ENCODE measurements at regions of chr18 and their contacts with region 1.

Region 1: DNA sequence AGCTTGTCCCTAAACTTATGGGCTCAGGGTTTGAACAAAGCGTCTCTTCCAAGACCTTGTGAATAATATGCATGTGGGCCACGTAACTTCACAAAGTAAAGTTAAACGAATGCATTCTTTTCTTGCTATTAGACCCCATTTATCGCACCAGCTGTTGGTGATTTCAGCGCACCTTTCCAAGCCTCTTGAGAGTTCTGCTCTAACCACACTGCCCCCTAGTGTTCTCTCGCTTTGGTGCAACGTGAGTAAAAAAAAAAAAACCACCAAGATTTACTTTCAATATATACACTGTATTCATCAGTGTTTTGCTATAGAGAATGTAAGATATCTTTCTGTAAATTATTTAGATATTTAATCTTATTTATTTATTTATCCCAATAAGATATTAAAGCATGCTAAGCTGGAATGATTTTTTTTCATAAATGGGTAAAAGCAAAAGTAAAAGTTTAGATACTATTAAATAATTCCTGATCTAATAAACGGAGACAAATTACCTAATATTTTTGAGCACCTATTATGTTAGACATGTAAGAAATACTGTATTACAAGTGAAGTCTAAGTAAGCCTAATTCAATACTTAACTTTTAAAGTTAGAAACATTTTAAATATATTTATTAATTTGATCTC is 459.5 kb downstream of the DLGAP1 start:
- DNase-seq: peak; percentile 77
- ATAC-seq: peak; percentile 78
- H3K4me3 Mint-ChIP-seq: no peak overlapping the region
- H3K27ac Mint-ChIP-seq: no peak overlapping the region
- H3K4me1 Mint-ChIP-seq: no peaks in the 10 kb centered on the region
- H3K27me3 Mint-ChIP-seq: peaks cover 4% of the 10 kb centered on the region

Region 2: DNA sequence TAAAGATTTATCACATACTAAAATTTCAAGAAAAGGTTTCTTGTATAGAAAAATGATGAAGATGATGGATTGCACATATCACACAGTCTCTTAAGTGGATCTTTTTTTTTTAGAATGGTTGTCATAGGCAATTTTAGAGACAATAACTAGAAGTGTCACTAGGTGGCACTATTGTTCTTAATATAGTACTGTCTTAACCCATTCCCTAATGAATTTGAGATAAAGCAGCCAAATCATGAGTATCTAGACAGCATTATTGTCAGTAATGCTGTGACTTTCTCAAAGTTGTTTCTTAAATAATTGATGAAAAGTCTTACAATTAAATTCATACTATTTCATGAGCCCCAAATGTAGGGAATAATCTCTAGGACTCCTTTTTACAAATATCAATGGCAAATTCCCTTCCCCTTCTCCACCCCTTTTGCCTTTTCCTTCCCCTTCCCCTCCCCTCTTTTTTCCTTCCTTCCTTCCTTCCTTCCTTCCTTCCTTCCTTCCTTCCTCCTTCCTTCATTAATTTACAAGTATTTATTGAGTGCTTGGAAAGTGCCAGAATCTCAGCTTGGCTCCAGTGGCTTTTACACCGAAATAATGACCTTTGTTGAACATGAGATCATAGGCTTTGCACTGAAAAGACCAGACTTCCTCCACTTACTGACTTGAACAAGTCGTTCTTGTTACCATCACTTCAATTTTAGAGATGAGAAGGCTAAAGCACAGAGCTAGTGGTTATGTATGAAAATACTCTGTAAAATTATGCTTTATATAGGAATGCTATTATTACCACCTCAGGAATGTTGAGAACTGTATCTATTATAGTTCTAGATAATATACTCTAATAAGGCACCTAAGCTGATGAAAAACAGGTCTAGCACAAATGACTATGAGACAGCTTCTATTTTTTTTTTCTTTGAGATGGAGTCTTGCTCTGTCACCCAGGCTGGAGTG is 713.9 kb before region 1 on chr18:
- CTCF ChIA-PET with region 1: interaction called, 4 read pairs
- POLR2A ChIA-PET with region 1: no interaction called
- intact Hi-C with region 1: loop called (anchors 5 kb)
- DNase-seq: no peak
- ATAC-seq: peak; percentile 90
- H3K4me3 Mint-ChIP-seq: no peak overlapping the region
- H3K27ac Mint-ChIP-seq: no peak overlapping the region
- H3K4me1 Mint-ChIP-seq: peaks cover 10% of the 10 kb centered on the region
- H3K27me3 Mint-ChIP-seq: no peaks in the 10 kb centered on the region

Region 3: GRCh38 chr18:3703732-3704176 is 291.8 kb before region 1 on chr18:
- CTCF ChIA-PET with region 1: interaction called, 3 read pairs
- POLR2A ChIA-PET with region 1: no interaction called
- intact Hi-C with region 1: loop called in 1 of 2 experiments (anchors 2 kb)
- DNase-seq: peak; percentile 63
- ATAC-seq: no peak
- H3K4me3 Mint-ChIP-seq: no peak overlapping the region
- H3K27ac Mint-ChIP-seq: no peak overlapping the region
- H3K4me1 Mint-ChIP-seq: peaks cover 4% of the 10 kb centered on the region
- H3K27me3 Mint-ChIP-seq: peaks cover 32% of the 10 kb centered on the region

Region 4: GRCh38 chr18:3966985-3967856 is 28.4 kb before region 1 on chr18:
- CTCF ChIA-PET with region 1: interaction called, 13 read pairs
- POLR2A ChIA-PET with region 1: no interaction called
- intact Hi-C with region 1: no loop called
- DNase-seq: no peak
- ATAC-seq: no peak
- H3K4me3 Mint-ChIP-seq: no peak overlapping the region
- H3K27ac Mint-ChIP-seq: no peak overlapping the region
- H3K4me1 Mint-ChIP-seq: no peaks in the 10 kb centered on the region
- H3K27me3 Mint-ChIP-seq: peaks cover 6% of the 10 kb centered on the region

Region 5: GRCh38 chr18:3983351-3983969 is 12.1 kb before region 1 on chr18:
- CTCF ChIA-PET with region 1: interaction called, 34 read pairs
- POLR2A ChIA-PET with region 1: no interaction called
- intact Hi-C with region 1: no loop called
- DNase-seq: no peak
- ATAC-seq: no peak
- H3K4me3 Mint-ChIP-seq: no peak overlapping the region
- H3K27ac Mint-ChIP-seq: no peak overlapping the region
- H3K4me1 Mint-ChIP-seq: peaks cover 18% of the 10 kb centered on the region
- H3K27me3 Mint-ChIP-seq: peaks cover 2% of the 10 kb centered on the region

Region 6: GRCh38 chr18:4007846-4008245 is 12.3 kb after region 1 on chr18:
- CTCF ChIA-PET with region 1: interaction called, 14 read pairs
- POLR2A ChIA-PET with region 1: no interaction called
- intact Hi-C with region 1: no loop called
- DNase-seq: no peak
- ATAC-seq: no peak
- H3K4me3 Mint-ChIP-seq: no peak overlapping the region
- H3K27ac Mint-ChIP-seq: no peak overlapping the region
- H3K4me1 Mint-ChIP-seq: peaks cover 3% of the 10 kb centered on the region
- H3K27me3 Mint-ChIP-seq: peaks cover 18% of the 10 kb centered on the region

Region 7: DNA sequence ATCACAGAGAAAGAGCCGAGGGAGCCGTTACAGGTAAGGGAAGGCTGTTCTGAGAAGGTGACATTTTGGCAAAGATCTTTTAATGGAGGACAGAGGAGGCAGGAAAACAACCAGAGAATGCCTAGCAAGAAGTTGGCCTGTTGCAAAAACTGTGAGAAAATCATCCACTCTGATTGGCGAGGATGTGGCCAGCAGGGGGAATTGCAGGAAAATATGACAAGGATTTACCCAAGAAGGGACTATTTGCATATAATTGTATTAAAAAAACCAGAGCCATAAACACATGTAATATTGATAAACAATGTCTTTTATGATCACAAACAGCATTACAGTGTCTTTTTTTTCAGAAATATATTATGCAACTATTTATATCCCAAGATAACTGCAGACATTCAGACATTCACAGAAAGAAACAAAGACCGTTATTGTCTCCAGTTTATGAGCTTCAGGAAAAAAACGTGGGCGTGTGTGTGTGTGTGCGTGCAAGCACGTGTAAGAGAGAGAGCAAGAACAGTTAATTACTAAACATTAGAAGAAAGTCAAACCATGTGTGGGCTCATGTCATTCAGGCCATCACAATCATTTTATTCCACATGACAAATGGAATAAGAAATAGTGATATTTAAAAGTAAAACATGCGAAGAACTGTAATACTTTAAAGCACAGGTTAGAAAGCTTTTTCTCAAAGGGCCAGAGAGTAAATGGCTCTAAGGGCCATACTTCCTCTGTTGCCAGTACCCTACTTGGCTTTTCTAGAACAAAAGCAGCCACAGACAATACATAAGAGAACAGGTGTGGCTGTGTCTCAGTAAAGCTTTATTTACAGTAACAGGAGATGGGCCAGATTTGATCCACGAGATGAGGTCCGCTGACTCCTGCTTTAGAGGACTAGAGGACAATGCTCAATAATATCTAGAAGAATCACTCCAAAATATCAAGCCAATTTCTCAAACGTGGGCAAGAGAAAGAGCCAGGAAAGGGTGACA is 135.4 kb after region 1 on chr18:
- CTCF ChIA-PET with region 1: no interaction called
- POLR2A ChIA-PET with region 1: no interaction called
- intact Hi-C with region 1: no loop called
- DNase-seq: no peak
- ATAC-seq: no peak
- H3K4me3 Mint-ChIP-seq: no peak overlapping the region
- H3K27ac Mint-ChIP-seq: no peak overlapping the region
- H3K4me1 Mint-ChIP-seq: no peaks in the 10 kb centered on the region
- H3K27me3 Mint-ChIP-seq: peaks cover 2% of the 10 kb centered on the region